Calu3 (cell line): ENCODE measurements at regions of chr12 and their contacts with region 1.

Region 1: GRCh38 chr12:76020731-76021672 is 10.6 kb downstream of the PHLDA1 start:
- DNase-seq: peak; percentile 70
- H3K4me3 Mint-ChIP-seq: peak overlapping the region; percentile 25
- H3K27ac Mint-ChIP-seq: peak overlapping the region; percentile 97
- H3K4me1 Mint-ChIP-seq: peaks cover 56% of the 10 kb centered on the region
- H3K27me3 Mint-ChIP-seq: no peaks in the 10 kb centered on the region
- CTCF ChIP-seq: no peak

Region 2: GRCh38 chr12:75722714-75723200 is 298.2 kb before region 1 on chr12:
- CTCF ChIA-PET with region 1: no interaction called
- intact Hi-C with region 1: loop called (anchors 5 kb)
- DNase-seq: peak; percentile 48
- H3K4me3 Mint-ChIP-seq: peak overlapping the region; percentile 3
- H3K27ac Mint-ChIP-seq: peak overlapping the region; percentile 94
- H3K4me1 Mint-ChIP-seq: peaks cover 64% of the 10 kb centered on the region
- H3K27me3 Mint-ChIP-seq: no peaks in the 10 kb centered on the region
- CTCF ChIP-seq: no peak

Region 3: GRCh38 chr12:75814851-75815754 is 205.9 kb before region 1 on chr12:
- CTCF ChIA-PET with region 1: no interaction called
- intact Hi-C with region 1: loop called (anchors 2 kb)
- DNase-seq: peak; percentile 38
- H3K4me3 Mint-ChIP-seq: no peak overlapping the region
- H3K27ac Mint-ChIP-seq: peak overlapping the region; percentile 37
- H3K4me1 Mint-ChIP-seq: peaks cover 41% of the 10 kb centered on the region
- H3K27me3 Mint-ChIP-seq: no peaks in the 10 kb centered on the region
- CTCF ChIP-seq: no peak

Region 4: DNA sequence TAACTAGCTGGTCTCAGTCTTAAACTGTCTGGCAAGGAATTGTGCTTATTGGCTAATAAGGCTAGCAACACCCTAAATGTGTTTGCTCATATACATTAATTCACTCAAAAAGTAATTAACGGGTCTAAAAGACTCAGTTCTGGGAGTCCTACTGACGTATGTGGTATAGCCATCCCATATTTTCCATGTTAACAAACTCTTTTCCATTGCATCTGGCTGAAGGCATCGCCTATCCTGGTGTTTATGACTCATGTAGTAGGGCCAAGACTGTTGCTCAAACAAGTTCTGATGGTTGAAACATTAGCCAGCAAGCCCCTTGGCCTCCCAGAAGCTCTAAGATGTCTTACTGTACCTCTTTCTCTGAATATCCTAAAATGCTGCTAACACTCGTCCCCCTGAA is 87.9 kb before region 1 on chr12:
- CTCF ChIA-PET with region 1: interaction called, 10 read pairs
- intact Hi-C with region 1: no loop called
- DNase-seq: peak; percentile 69
- H3K4me3 Mint-ChIP-seq: peak overlapping the region; percentile 4
- H3K27ac Mint-ChIP-seq: peak overlapping the region; percentile 43
- H3K4me1 Mint-ChIP-seq: peaks cover 34% of the 10 kb centered on the region
- H3K27me3 Mint-ChIP-seq: no peaks in the 10 kb centered on the region
- CTCF ChIP-seq: no peak

Region 5: GRCh38 chr12:75986001-75986746 is 34.8 kb before region 1 on chr12:
- CTCF ChIA-PET with region 1: interaction called, 11 read pairs
- intact Hi-C with region 1: loop called (anchors 2 kb)
- DNase-seq: peak; percentile 63
- H3K4me3 Mint-ChIP-seq: peak overlapping the region; percentile 40
- H3K27ac Mint-ChIP-seq: peak overlapping the region; percentile 97
- H3K4me1 Mint-ChIP-seq: peaks cover 67% of the 10 kb centered on the region
- H3K27me3 Mint-ChIP-seq: no peaks in the 10 kb centered on the region
- CTCF ChIP-seq: no peak

Region 6: DNA sequence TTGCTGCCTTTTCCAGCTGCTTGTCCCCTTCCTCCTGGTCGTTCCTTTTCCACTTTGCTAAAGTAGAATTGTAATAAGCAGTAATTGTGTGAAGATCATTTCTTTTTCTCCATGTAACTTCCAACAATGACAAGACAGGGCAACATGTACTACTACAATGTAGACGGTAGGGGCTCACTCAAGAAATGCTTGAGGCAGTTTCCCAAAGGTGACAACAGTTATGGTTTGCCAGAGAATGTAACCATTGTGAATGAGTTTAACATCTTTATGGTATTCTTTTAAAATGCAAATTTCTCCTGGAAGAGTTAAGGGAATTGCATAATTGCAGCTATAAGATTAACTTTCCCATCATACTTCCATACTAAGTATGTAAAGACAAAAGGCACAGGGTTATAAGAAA is 34.4 kb after region 1 on chr12:
- CTCF ChIA-PET with region 1: no interaction called
- intact Hi-C with region 1: no loop called
- DNase-seq: no peak
- H3K4me3 Mint-ChIP-seq: no peak overlapping the region
- H3K27ac Mint-ChIP-seq: no peak overlapping the region
- H3K4me1 Mint-ChIP-seq: no peaks in the 10 kb centered on the region
- H3K27me3 Mint-ChIP-seq: no peaks in the 10 kb centered on the region
- CTCF ChIP-seq: no peak

Region 7: DNA sequence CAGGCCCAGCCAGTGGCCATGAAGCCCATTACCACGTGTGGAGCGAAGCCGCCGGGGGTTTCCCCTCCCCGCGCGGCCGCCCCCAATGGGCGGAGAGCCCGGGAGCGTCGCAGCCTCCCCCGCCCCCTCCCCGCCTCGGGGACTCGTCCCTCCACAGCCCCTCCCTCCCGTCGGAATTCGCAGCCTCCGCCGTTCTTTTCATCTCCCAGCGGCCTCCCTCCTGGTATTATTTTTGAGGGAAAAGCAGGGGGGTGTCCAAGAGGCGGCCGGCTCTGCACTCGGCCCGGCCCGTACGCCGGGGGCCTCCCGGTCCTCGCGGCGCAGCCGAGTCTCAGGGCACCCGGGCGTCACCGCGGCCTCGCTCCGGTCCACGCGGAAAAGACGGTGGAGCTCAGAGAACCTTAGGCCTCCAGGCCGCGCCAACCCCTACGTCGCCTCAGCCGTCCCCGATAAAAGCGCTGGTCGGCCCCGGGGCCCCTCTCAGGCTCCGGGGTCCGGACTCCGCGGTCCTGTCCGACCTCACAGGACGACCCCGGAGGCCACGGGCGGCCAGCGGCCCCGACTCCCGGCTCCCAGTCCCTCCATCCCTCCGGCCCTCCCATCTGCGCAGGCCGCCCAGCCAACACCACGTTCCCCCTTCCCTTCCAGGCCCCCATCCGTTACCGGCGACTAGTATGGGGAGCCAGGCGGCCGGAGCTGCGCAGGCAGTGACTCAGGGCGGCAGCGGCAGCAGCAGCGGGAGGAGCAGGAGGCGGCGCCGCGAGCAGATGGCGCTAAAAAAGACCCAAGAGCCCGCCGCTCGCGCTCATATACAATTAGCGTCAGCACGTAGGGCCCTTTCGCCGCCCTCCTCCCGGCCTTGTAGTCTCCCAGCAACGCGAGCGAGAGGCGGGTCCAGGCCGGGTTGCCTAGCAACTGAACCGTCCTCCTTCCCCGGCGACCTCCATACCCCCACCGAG is 63.2 kb after region 1 on chr12 and contains the start of gene NAP1L1:
- CTCF ChIA-PET with region 1: no interaction called
- intact Hi-C with region 1: no loop called
- DNase-seq: peak; percentile 98
- H3K4me3 Mint-ChIP-seq: peak within 1 kb of the TSS; percentile 99
- H3K27ac Mint-ChIP-seq: peak within 1 kb of the TSS; percentile 97
- H3K4me1 Mint-ChIP-seq: peaks cover 31% of the 10 kb centered on the region
- H3K27me3 Mint-ChIP-seq: no peaks in the 10 kb centered on the region
- CTCF ChIP-seq: no peak
- total RNA-seq, gene NAP1L1: 394 and 467 TPM in 2 replicates